A673 (cell line): ENCODE measurements at regions of chr2 and their contacts with region 1.

Region 1: DNA sequence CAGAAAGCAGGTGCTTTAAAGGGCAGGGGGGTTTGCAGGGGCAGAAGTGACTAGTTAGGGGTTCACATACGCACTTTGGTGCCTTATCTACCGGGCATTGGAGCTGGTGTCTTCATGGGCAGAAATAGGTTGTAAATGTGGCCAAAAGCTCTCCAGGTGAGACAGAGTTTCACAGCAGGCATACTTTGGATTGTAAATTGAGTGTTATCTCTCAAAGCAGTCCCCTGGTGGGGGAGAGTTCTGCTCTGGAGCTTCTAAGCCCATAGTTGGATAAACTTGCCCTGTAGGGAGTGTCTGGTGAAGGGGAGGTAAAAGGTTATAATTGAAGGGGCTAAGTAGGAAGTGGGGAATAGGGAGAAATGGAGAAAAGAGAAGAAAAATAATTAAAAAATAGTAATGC is 43.1 kb downstream of the COL4A3 start:
- DNase-seq: no peak
- H3K4me3 ChIP-seq: no peak overlapping the region
- H3K27ac ChIP-seq: no peak overlapping the region
- H3K4me1 ChIP-seq: no peaks in the 10 kb centered on the region
- H3K27me3 ChIP-seq: no peaks in the 10 kb centered on the region
- CTCF ChIP-seq: no peak

Region 2: GRCh38 chr2:226813148-226813701 is 394.3 kb before region 1 on chr2:
- CTCF ChIA-PET with region 1: interaction called, 10 read pairs
- POLR2A ChIA-PET with region 1: no interaction called
- intact Hi-C with region 1: no loop called
- DNase-seq: no peak
- H3K4me3 ChIP-seq: no peak overlapping the region
- H3K27ac ChIP-seq: no peak overlapping the region
- H3K4me1 ChIP-seq: no peaks in the 10 kb centered on the region
- H3K27me3 ChIP-seq: no peaks in the 10 kb centered on the region
- CTCF ChIP-seq: peak; percentile 55